Panc1 (cell line): ENCODE measurements at regions of chr7 and their contacts with region 1.

Region 1: GRCh38 chr7:115559877-115560276 is 470.7 kb downstream of the TFEC start:
- DNase-seq: no peak
- ATAC-seq: no peak
- H3K4me3 ChIP-seq: no peak overlapping the region
- H3K27ac ChIP-seq: no peak overlapping the region
- H3K4me1 ChIP-seq: no peaks in the 10 kb centered on the region
- H3K27me3 ChIP-seq: no peaks in the 10 kb centered on the region
- CTCF ChIP-seq: no peak

Region 2: GRCh38 chr7:115293628-115294240 is 266.1 kb before region 1 on chr7:
- CTCF ChIA-PET with region 1: no interaction called
- POLR2A ChIA-PET with region 1: no interaction called
- in situ Hi-C with region 1: no loop called
- intact Hi-C with region 1: no loop called
- DNase-seq: no peak
- ATAC-seq: no peak
- H3K4me3 ChIP-seq: no peak overlapping the region
- H3K27ac ChIP-seq: no peak overlapping the region
- H3K4me1 ChIP-seq: no peaks in the 10 kb centered on the region
- H3K27me3 ChIP-seq: no peaks in the 10 kb centered on the region
- CTCF ChIP-seq: no peak

Region 3: DNA sequence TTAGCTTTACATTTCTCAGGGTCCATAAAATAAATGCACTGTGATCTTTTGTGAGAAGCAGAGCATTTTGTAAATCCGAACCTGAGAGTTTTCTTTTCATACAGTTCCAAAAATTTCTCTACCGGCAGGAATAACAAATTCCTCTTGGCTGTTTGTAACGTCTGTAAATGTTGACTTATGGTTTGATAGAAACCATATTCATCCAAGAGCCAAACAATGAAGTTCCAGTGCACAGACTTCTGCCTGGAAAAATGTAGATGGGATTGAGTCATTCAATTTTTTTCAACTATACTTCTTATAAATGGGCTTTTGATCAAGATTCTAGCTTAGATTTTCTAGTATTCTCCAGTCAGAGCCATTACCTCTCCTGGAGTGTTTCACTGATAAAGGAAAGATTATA is 59.9 kb before region 1 on chr7:
- CTCF ChIA-PET with region 1: no interaction called
- POLR2A ChIA-PET with region 1: no interaction called
- in situ Hi-C with region 1: no loop called
- intact Hi-C with region 1: no loop called
- DNase-seq: no peak
- ATAC-seq: no peak
- H3K4me3 ChIP-seq: no peak overlapping the region
- H3K27ac ChIP-seq: no peak overlapping the region
- H3K4me1 ChIP-seq: no peaks in the 10 kb centered on the region
- H3K27me3 ChIP-seq: no peaks in the 10 kb centered on the region
- CTCF ChIP-seq: no peak

Region 4: DNA sequence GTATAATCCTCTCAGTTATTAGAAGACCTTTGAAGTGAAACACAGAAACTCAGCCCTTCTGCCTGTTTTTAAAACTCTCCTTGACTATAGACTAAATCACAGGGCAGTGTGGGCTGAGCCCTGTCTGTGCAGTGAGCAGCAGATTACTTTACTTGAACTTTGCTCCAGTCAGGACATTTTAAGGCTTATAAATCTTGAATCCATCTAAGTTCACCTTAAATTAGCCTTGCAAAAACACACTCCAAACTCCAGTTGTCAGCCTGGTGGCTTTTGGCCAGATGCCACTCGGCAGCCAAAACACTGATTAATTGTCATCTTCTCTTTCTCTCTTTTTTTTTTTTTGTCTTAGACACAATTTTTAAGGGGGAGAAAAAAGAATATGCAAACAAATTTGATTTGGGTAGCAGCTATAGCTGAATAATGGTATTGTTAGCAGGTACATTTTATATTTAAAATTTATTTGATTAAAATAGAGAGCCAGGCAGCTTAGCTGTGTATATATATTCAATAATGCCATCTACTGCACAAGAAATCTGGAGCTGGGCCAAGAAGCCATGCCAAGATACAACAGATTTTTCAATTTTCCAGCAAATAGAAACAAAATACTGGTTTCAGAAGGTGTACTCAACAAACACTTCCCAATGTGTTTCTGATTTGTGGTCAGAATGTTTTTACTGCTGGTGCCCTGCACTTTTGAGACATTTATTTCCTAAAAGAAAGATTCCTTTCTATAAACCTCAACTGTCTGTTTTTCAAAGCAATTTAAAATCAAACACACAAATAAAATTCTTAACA is 223.0 kb after region 1 on chr7:
- CTCF ChIA-PET with region 1: no interaction called
- POLR2A ChIA-PET with region 1: interaction called, 12 read pairs
- in situ Hi-C with region 1: no loop called
- intact Hi-C with region 1: no loop called
- DNase-seq: no peak
- ATAC-seq: no peak
- H3K4me3 ChIP-seq: no peak overlapping the region
- H3K27ac ChIP-seq: no peak overlapping the region
- H3K4me1 ChIP-seq: no peaks in the 10 kb centered on the region
- H3K27me3 ChIP-seq: 0 out of 2 replicates have a peak, but pooled peaks cover 3% of the 10 kb centered on the region
- CTCF ChIP-seq: no peak

Region 5: GRCh38 chr7:116173051-116174028 is 613.5 kb after region 1 on chr7:
- CTCF ChIA-PET with region 1: no interaction called
- POLR2A ChIA-PET with region 1: no interaction called
- in situ Hi-C with region 1: no loop called
- intact Hi-C with region 1: no loop called
- DNase-seq: peak; percentile 80
- ATAC-seq: peak; percentile 68
- H3K4me3 ChIP-seq: no peak overlapping the region
- H3K27ac ChIP-seq: peak overlapping the region; percentile 73; the same call in 1 of the 2 replicates
- H3K4me1 ChIP-seq: peaks cover 15% of the 10 kb centered on the region
- H3K27me3 ChIP-seq: peaks cover 2% of the 10 kb centered on the region; the same call in 1 of the 2 replicates
- CTCF ChIP-seq: peak; percentile 60; the same call in 1 of the 2 replicates